GM10248 (cell line): ENCODE measurements at regions of chr11 and their contacts with region 1.

Region 1: DNA sequence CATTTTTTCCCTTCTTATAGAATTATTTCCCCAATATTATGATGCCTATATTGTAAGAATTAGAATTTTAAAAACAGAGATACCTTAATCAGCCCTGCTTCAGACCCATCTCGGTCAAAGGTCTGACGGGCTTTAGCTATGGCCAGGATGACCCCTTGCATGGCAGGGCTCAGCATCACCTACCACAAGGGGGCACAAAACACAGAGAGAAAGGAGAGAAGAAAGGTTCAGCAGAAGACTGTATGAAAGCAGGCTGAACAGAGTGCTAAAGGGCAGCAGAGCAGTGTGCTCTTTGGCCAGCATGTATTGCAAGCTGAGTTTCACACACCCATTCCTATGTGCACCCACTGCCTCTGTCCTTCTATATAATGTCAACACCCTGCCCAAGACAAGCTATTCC is 26.8 kb downstream of the CLDN25 start:
- DNase-seq: peak; percentile 43
- CTCF ChIP-seq: peak; percentile 65

Region 2: GRCh38 chr11:113828191-113828590 is 21.8 kb after region 1 on chr11:
- CTCF ChIA-PET with region 1: interaction called, 12 read pairs
- POLR2A ChIA-PET with region 1: no interaction called
- DNase-seq: no peak
- CTCF ChIP-seq: no peak

Region 3: GRCh38 chr11:113840932-113841664 is 34.7 kb after region 1 on chr11:
- CTCF ChIA-PET with region 1: no interaction called
- POLR2A ChIA-PET with region 1: no interaction called
- DNase-seq: peak; percentile 24
- CTCF ChIP-seq: no peak